Lower lobe of right lung (tissue), 2 donors: ENCODE measurements at regions of chr1 and their contacts with region 1.

Region 1: DNA sequence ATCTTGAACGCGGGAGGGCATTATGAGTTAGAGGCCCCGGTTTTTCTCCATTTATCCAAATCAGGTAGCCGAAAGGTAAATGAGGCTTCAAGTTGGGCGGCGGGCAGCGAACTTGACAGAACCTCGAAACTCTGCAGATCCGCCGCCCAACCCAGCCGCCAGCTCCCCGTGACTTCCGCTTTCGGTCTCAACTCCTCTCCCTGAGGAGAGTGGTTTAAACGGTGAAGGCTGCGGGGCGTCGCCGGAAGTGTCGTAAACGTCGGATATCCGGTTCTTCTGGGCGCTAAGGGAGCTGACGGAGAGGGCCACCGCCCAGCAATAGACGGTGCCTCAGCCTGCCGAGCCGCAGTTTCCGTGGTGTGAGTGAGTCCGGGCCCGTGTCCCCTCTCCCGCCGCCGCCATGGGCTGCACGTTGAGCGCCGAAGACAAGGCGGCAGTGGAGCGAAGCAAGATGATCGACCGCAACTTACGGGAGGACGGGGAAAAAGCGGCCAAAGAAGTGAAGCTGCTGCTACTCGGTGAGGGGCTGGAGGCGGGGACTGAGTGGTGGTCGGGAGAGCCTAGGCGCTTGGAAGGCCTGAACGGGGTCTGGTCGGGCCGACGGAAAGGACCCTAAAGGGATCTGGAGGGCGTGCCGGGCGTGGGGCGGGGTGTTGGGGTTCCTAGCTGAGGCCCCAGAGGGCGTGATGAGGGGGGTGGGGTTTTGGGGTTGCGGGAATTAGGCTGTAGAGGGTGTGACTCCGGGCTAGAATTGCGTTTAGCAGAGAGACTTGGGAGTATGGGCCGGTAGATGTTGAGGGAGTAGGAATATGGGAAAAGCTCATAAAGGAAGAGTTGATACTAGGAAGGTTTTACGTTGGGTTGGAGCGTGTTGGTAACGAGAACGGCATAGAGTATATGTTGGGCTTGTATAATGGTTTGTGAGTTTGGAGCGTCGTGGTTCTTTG is at the start of gene GNAI3:
- DNase-seq: peak; percentile 98
- ATAC-seq: peak; percentile 98 to 99
- H3K4me3 ChIP-seq: peak within 1 kb of the TSS; percentile 88
- H3K27ac ChIP-seq: peak within 1 kb of the TSS; percentile 98
- H3K4me1 ChIP-seq: peaks cover 48% of the 10 kb centered on the region
- H3K27me3 ChIP-seq: no peaks in the 10 kb centered on the region
- CTCF ChIP-seq: no peak
- total RNA-seq, gene GNAI3: 6.7 TPM

Region 2: GRCh38 chr1:109426278-109427170 is 122.1 kb before region 1 on chr1 and contains the start of gene PSMA5:
- intact Hi-C with region 1: no loop called
- DNase-seq: peak; percentile 98
- ATAC-seq: peak; percentile 99 to 100
- H3K4me3 ChIP-seq: peak within 1 kb of the TSS; percentile 74
- H3K27ac ChIP-seq: peak within 1 kb of the TSS; percentile 87
- H3K4me1 ChIP-seq: peaks cover 38% of the 10 kb centered on the region
- H3K27me3 ChIP-seq: no peaks in the 10 kb centered on the region
- CTCF ChIP-seq: no peak
- total RNA-seq, gene PSMA5: 55.4 TPM

Region 3: GRCh38 chr1:109630081-109630897 is 81.7 kb after region 1 on chr1:
- intact Hi-C with region 1: loop called (anchors 10 kb)
- DNase-seq: no peak
- ATAC-seq: peak in 1 of 2 donors; percentile 9
- H3K4me3 ChIP-seq: no peak overlapping the region
- H3K27ac ChIP-seq: no peak overlapping the region
- H3K4me1 ChIP-seq: peaks cover 5% of the 10 kb centered on the region
- H3K27me3 ChIP-seq: no peaks in the 10 kb centered on the region
- CTCF ChIP-seq: peak; percentile 31

Region 4: GRCh38 chr1:109773146-109773899 is 224.7 kb after region 1 on chr1:
- intact Hi-C with region 1: loop called (anchors 10 kb)
- DNase-seq: peak; percentile 86
- ATAC-seq: peak; percentile 87 to 91
- H3K4me3 ChIP-seq: no peak overlapping the region
- H3K27ac ChIP-seq: no peak overlapping the region
- H3K4me1 ChIP-seq: peaks cover 19% of the 10 kb centered on the region
- H3K27me3 ChIP-seq: no peaks in the 10 kb centered on the region
- CTCF ChIP-seq: peak; percentile 91